CD14-positive monocyte (primary cell): ENCODE measurements at regions of chr6 and their contacts with region 1.

Region 1: GRCh38 chr6:113433335-113433991 is 423.7 kb upstream of the MARCKS start:
- DNase-seq: peak; percentile 61 to 81 (median 70)
- H3K4me3 ChIP-seq: peak overlapping the region in 2 of 3 experiments; percentile 22 to 68
- H3K4me3 Mint-ChIP-seq: peak overlapping the region; percentile 7 to 82
- H3K27ac ChIP-seq: peak overlapping the region; percentile 61 to 81
- H3K27ac Mint-ChIP-seq: peak overlapping the region; percentile 79 to 91 (median 87)
- H3K4me1 ChIP-seq: peaks cover 30 to 31% of the 10 kb centered on the region in 2 donors
- H3K4me1 Mint-ChIP-seq: peaks cover 30% of the 10 kb centered on the region
- H3K27me3 ChIP-seq: no peaks in the 10 kb centered on the region
- H3K27me3 Mint-ChIP-seq: peaks cover 0 to 2% (median 0%) of the 10 kb centered on the region in 3 donors
- CTCF ChIP-seq: no peak

Region 2: DNA sequence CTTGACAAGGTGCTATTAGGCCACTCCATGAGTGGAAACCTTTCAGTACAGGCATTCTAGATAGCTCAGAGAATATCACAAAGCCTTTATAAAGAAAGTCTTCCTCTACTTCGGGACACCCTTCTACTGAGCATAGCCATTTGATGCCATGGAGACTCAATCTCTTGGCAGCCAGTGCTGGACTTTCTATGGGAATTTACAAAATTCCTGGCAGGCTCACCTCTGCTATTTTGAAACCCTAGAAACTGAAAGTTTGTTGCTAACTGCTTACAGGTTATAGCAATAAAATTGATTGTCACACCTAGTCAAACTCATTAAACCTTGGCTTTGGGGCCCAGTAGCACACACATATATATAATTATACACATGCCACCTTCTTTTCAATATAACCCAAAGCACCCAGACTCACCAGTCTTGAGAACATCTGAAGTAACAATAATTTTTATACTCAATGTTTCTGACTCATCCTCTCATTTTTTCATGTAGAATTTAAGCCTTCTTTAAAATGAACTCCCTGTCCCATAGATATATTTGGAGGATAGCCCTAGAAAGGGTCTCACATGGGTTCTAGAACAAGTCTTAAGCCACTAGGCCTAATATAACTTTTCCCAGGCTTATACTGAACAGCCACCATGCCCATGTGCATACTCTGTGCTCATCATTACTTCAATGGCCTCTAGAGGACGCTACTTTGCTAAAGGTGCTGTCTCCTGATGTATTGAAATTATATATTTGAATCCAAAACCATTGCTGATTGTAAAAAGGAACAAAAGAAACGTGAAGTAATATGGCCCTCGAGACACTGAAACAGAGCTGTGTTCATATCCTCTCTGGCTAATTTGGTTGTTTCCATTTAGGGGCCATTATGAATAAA is 55.6 kb after region 1 on chr6:
- intact Hi-C with region 1: loop called in 1 of 2 experiments (anchors 10 kb)
- DNase-seq: no peak
- H3K4me3 ChIP-seq: no peak overlapping the region
- H3K4me3 Mint-ChIP-seq: no peak overlapping the region
- H3K27ac ChIP-seq: no peak overlapping the region
- H3K27ac Mint-ChIP-seq: no peak overlapping the region
- H3K4me1 ChIP-seq: peaks cover 6 to 12% of the 10 kb centered on the region in 2 donors
- H3K4me1 Mint-ChIP-seq: peaks cover 11% of the 10 kb centered on the region
- H3K27me3 ChIP-seq: no peaks in the 10 kb centered on the region
- H3K27me3 Mint-ChIP-seq: peaks cover 0 to 3% (median 0%) of the 10 kb centered on the region in 3 donors
- CTCF ChIP-seq: no peak